GM10248 (cell line): ENCODE measurements at regions of chr2 and their contacts with region 1.

Region 1: DNA sequence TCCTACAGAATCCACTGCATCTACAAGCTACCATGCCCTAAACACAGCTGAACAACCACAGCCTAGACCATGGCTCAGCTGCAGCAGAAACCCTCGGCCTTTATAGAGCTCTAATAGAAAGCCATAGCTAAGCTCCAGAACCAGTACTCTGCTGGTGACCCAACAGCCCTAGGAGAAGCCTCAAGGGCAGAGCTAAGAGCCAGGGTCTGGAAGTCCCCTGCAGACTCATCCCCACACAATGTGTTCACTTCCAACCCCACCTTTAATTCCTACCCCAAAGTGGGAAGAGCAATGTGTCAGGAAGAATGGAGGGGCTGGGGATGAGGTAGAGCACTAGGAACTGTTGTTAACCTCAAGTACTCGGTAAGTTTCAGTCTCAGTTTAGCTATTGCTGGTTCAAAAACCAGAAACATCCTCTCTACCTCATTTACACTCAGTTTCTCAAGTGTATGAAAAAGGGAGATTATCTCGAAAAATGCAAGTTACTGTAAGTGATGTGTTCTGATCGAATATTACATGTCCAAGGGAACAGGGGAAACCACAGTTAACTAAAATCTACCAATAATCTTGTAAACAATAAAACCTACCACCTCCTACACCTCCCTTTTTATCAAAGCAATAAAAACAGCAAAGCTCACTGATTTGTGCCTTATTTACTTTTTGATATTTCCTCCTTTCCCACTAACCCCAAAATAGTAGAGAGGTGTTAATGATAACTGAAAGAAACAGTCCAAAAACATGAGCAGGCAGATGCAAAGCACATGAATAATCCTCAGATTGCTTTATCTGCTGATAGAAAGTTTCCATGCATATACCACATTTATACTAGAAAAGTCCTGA is 36.2 kb downstream of the THADA start:
- DNase-seq: peak; percentile 31
- CTCF ChIP-seq: no peak

Region 2: GRCh38 chr2:43576981-43577892 is 17.6 kb after region 1 on chr2:
- CTCF ChIA-PET with region 1: interaction called, 62 read pairs
- POLR2A ChIA-PET with region 1: no interaction called
- DNase-seq: peak; percentile 34
- CTCF ChIP-seq: peak; percentile 63

Region 3: DNA sequence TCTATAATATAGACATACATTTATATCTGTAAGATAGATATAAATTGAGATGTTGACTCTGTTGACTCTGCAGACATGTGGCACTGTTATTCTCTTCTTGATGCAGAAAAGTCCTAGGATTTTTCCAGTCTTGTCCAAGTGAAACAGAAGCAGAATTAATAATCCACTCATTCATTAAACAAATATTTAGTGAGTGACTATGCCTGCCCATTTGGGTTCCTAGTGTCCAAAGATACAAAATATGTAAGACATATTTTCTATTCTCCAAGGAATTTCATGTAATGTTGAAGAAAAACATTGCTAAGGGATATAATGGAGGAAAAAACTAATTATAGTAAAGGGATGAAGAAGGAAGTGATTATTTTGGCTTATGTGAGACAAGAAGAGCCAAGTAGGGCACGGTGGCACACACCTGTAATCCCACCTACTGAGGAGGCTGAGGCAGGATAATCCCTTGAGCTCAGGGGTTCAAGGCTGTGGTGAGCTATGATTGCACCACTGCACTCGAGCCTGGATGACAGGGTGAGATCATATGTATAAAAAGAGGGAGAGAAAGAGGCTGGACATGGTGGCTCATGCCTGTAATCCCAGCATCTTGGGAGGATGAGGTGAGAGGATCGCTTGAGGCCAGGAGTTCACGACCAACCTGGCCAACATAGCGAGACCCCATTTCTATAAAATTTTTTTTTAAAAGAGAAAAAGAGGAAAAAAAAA is 57.5 kb after region 1 on chr2:
- CTCF ChIA-PET with region 1: no interaction called
- POLR2A ChIA-PET with region 1: no interaction called
- DNase-seq: no peak
- CTCF ChIP-seq: no peak